ENCODE measurements at regions of chr18 and their contacts with region 1.

Region 1: GRCh38 chr18:49250816-49251388 is 209.5 kb downstream of the DYM start:
- DNase-seq: no peak
- H3K4me3 ChIP-seq: no peak overlapping the region
- H3K27ac ChIP-seq: no peak overlapping the region
- H3K4me1 ChIP-seq: no peaks in the 10 kb centered on the region
- H3K27me3 ChIP-seq: no peaks in the 10 kb centered on the region
- CTCF ChIP-seq: peak in 1 of 4 experiments; percentile 24
- POLR2A ChIP-seq: no peak

Region 2: GRCh38 chr18:48605408-48605845 is 645.5 kb before region 1 on chr18:
- intact Hi-C with region 1: no loop called
- DNase-seq: no peak
- H3K4me3 ChIP-seq: no peak overlapping the region
- H3K27ac ChIP-seq: no peak overlapping the region
- H3K4me1 ChIP-seq: no peaks in the 10 kb centered on the region
- H3K27me3 ChIP-seq: no peaks in the 10 kb centered on the region
- CTCF ChIP-seq: no peak
- POLR2A ChIP-seq: no peak

Region 3: GRCh38 chr18:48951448-48952286 is 299.2 kb before region 1 on chr18:
- intact Hi-C with region 1: no loop called
- DNase-seq: peak; percentile 85
- H3K4me3 ChIP-seq: peak overlapping the region; percentile 70 to 93
- H3K27ac ChIP-seq: peak overlapping the region; percentile 98 to 99
- H3K4me1 ChIP-seq: peaks cover 3% of the 10 kb centered on the region
- H3K27me3 ChIP-seq: no peaks in the 10 kb centered on the region
- CTCF ChIP-seq: peak in 2 of 4 experiments; percentile 35 to 36
- POLR2A ChIP-seq: peak; percentile 89

Region 4: DNA sequence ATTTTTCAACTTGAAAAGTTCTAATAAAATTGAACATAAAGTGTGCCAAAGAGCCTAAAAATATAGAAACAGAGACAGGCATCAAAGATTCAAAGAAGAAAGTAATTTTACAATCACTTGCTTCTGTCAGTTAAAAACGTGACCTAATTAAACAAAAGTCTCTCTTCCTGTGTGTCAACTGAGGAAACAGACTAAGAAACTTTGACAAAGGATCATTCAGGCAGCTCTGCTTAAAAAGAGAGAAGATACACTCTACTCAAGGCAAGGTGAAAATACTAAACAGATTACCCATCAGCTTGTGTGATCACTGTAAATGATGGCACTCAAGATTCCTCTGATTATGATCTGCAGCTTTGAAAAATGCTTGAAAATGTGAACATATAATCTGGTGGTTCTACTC is 161.8 kb after region 1 on chr18:
- intact Hi-C with region 1: loop called (anchors 2 kb)
- DNase-seq: no peak
- H3K4me3 ChIP-seq: no peak overlapping the region
- H3K27ac ChIP-seq: no peak overlapping the region
- H3K4me1 ChIP-seq: no peaks in the 10 kb centered on the region
- H3K27me3 ChIP-seq: no peaks in the 10 kb centered on the region
- CTCF ChIP-seq: no peak
- POLR2A ChIP-seq: no peak

Region 5: DNA sequence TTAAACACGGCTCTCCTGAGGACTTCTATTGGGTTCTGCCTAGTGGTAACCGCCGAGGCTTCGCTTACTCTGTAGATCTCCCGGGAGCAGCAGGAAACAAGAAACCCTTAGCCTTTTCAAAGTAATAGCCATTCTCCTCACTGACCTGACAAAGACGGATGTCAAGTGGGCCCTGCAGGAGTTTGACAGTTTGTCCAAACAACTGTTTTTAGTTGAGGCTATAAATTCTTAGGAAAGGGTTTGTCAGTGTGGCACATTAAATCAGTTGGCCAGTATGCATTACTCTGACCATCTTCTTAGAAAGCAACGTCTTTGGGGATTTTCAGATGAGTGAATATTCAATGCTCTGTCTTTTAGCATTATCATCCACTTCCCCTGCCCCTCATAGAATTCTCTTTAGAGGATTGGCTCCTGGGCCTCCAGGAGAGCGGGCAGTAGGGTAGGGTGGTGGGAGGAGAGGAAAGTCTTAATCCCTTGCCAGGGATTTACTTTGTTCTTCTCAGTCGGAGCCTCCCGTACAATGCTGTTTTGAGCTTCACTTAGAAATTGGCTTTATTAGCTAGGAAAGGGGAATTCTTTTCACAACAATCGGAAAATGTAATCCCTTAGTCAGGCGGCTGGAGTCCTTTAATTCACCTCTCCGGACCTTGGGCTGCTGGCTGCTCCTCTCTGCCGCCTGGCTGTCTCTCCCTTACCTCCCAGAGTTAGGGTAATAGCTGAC is 249.5 kb after region 1 on chr18:
- intact Hi-C with region 1: no loop called
- DNase-seq: no peak
- H3K4me3 ChIP-seq: no peak overlapping the region
- H3K27ac ChIP-seq: no peak overlapping the region
- H3K4me1 ChIP-seq: no peaks in the 10 kb centered on the region
- H3K27me3 ChIP-seq: no peaks in the 10 kb centered on the region
- CTCF ChIP-seq: no peak
- POLR2A ChIP-seq: no peak

Measured in prostate gland (tissue), 2 donors.